ENCODE measurements at regions of chrX and their contacts with region 1.

Region 1: GRCh38 chrX:63754860-63755582 is 30.0 kb downstream of the ARHGEF9 start:
- DNase-seq: peak; percentile 68 to 93 (median 84)
- ATAC-seq: peak; percentile 94
- H3K4me3 ChIP-seq: peak overlapping the region; percentile 91 to 94
- H3K4me3 Mint-ChIP-seq: peak overlapping the region; percentile 99
- H3K27ac ChIP-seq: peak overlapping the region; percentile 89 to 92
- H3K27ac Mint-ChIP-seq: peak overlapping the region; percentile 98
- H3K4me1 ChIP-seq: peaks cover 21% of the 10 kb centered on the region
- H3K4me1 Mint-ChIP-seq: peaks cover 35% of the 10 kb centered on the region
- H3K27me3 ChIP-seq: no peaks in the 10 kb centered on the region
- H3K27me3 Mint-ChIP-seq: peaks cover under 1% of the 10 kb centered on the region
- CTCF ChIP-seq: no peak

Region 2: DNA sequence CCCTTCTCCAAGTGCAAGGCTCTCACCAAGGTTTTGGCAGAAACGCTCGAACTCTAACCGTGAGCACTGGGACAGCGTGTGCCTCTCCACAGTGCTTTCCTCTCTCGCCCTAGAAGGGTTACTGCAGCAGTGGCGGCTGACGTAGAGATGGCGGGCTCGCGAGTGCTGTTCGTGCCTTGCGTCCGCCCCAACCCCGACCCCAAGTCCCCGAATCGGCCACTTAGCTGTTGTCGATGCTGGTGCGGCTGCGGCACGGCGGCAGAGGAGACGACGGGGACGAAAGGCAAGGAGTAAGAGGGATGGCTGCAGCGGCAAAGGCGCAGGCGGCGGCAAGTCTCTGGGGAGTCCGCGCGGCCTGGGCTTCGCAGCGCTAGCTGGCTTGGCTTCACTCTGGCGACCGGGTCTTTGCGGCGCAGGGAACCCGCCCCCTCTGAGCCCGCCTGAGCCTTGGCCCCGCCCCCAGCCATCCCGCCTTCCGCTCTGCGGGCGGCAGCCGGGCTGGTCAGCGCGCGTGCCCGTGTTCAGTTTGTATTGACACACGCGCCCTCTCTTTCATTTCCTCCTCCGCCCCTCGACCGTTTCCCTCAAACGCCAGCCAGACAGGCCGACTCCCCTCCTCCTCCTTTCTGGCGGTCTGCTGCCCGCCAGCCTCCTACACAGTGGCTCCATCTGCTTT is 403.9 kb before region 1 on chrX and contains the start of gene SPIN4:
- CTCF ChIA-PET with region 1: no interaction called
- POLR2A ChIA-PET with region 1: no interaction called
- intact Hi-C with region 1: loop called (anchors 1 to 5 kb)
- DNase-seq: peak; percentile 7 to 79 (median 53)
- ATAC-seq: peak; percentile 80
- H3K4me3 ChIP-seq: peak within 1 kb of the TSS; percentile 66 to 71
- H3K4me3 Mint-ChIP-seq: peak within 1 kb of the TSS; percentile 91
- H3K27ac ChIP-seq: peak within 1 kb of the TSS; percentile 29 to 63
- H3K27ac Mint-ChIP-seq: peak within 1 kb of the TSS; percentile 66
- H3K4me1 ChIP-seq: peaks cover 8% of the 10 kb centered on the region
- H3K4me1 Mint-ChIP-seq: peaks cover 26% of the 10 kb centered on the region
- H3K27me3 ChIP-seq: no peaks in the 10 kb centered on the region
- H3K27me3 Mint-ChIP-seq: no peaks in the 10 kb centered on the region
- CTCF ChIP-seq: no peak
- total RNA-seq, gene SPIN4: 1.0 to 1.3 TPM

Region 3: DNA sequence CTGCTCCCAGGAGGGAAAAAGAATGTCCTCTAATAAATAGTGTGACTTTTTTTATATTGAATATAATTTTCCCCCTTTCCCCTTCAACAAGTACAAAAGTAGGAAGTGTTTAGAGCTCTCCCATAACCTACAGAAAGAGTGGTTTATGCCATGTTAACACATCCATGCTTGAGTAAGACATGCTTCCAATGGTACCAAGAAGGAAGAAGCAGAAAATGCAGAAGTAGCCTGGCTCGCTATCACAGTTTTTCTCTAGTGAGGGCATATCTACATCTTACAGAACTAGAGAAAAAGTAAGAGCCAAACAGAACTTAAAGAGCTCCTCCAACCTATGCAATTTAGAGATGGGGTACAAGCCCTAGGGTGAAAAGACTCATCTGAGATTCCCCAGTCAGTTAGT is 52.5 kb before region 1 on chrX:
- CTCF ChIA-PET with region 1: no interaction called
- POLR2A ChIA-PET with region 1: no interaction called
- intact Hi-C with region 1: loop called (anchors 10 kb)
- DNase-seq: no peak
- ATAC-seq: no peak
- H3K4me3 ChIP-seq: no peak overlapping the region
- H3K4me3 Mint-ChIP-seq: no peak overlapping the region
- H3K27ac ChIP-seq: no peak overlapping the region
- H3K27ac Mint-ChIP-seq: no peak overlapping the region
- H3K4me1 ChIP-seq: no peaks in the 10 kb centered on the region
- H3K4me1 Mint-ChIP-seq: peaks cover 2% of the 10 kb centered on the region
- H3K27me3 ChIP-seq: no peaks in the 10 kb centered on the region
- H3K27me3 Mint-ChIP-seq: no peaks in the 10 kb centered on the region
- CTCF ChIP-seq: no peak

Region 4: DNA sequence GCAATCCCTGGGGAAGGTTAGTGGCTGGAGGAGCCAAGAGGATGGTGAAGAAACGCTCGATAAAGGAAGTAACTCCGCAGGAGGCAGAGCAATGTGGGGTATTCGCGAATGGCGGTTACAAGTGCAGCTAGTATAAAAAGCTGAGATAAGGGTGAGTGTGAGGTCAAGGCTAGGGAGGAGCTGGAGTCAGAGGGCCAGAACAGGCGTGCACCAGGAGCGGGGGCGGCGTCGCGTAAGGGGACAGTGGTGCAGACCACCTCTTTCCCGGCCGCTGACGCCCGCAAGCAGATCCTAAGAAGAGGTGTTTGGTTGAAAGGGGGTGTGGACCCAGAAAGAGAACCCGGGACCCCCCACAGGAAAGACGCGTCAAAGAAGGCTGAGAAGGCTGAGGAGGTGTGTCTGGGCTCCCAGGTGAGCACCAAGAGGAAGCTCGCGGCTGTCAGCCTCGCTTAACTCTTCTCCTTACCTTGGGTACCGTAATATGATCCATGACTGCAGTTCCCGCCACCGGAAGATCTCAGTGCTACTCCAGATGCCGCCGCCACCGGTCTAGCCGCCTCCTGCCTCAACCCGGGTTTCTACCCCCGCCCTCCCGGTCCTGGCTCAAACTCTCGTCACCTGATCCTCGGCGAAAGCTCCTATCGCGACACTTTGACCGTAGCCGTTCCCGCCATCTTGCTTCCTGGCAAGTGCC is 640.0 kb after region 1 on chrX and contains the start of gene MTMR8:
- CTCF ChIA-PET with region 1: no interaction called
- POLR2A ChIA-PET with region 1: interaction called, 3 read pairs
- intact Hi-C with region 1: loop called in 1 of 2 experiments (anchors 10 kb)
- DNase-seq: peak; percentile 53 to 86 (median 77)
- ATAC-seq: peak; percentile 87
- H3K4me3 ChIP-seq: peak within 1 kb of the TSS; percentile 60 to 87
- H3K4me3 Mint-ChIP-seq: peak within 1 kb of the TSS; percentile 94
- H3K27ac ChIP-seq: peak within 1 kb of the TSS; percentile 32 to 44
- H3K27ac Mint-ChIP-seq: peak within 1 kb of the TSS; percentile 91
- H3K4me1 ChIP-seq: peaks cover 4% of the 10 kb centered on the region
- H3K4me1 Mint-ChIP-seq: peaks cover 47% of the 10 kb centered on the region
- H3K27me3 ChIP-seq: no peaks in the 10 kb centered on the region
- H3K27me3 Mint-ChIP-seq: no peaks in the 10 kb centered on the region
- CTCF ChIP-seq: no peak
- total RNA-seq, gene MTMR8: 2.1 to 2.5 TPM

Region 5: DNA sequence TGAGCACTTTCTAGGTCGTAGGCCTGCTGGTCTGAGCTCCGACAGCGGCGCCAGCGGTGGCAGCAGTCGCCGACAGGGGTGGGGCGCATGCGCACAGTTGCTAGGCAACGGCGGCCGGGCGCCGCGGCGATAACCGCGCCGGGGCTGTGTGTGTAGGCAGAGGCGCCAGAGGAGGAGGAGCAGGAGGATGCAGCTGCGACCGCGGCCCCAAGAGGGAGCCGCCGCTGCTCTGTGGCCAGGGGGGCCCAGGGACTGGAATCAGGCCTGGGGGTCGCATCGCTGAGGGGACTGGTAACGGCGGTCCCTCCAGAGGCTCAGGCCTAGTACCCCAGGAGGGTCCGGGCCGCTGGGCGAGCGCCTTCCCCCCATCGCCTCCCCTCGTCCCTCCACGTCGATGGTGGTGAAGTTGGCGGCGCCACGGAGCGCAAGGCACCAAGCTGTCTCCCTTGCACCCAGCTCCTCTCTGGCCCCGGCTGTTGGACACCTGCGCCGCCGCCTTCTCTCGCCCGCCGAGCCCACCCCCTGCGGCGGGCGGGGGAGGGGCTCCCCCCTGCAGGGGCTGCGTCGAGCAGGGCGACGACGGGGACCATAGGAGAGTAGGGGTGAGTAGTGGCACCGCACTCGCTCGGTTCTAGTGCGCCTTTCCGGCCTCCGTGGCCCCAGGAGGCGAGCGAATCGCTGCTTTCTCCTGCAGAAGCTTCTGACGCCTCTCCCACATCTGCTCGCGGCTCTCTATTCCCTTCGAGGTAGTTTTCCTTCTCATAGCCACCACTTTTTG is 1279.8 kb after region 1 on chrX:
- CTCF ChIA-PET with region 1: no interaction called
- POLR2A ChIA-PET with region 1: no interaction called
- intact Hi-C with region 1: loop called (anchors 2 to 5 kb)
- DNase-seq: peak; percentile 59 to 89 (median 80)
- ATAC-seq: peak; percentile 85
- H3K4me3 ChIP-seq: peak within 1 kb of the TSS; percentile 64 to 66
- H3K4me3 Mint-ChIP-seq: peak within 1 kb of the TSS; percentile 94
- H3K27ac ChIP-seq: peak within 1 kb of the TSS; percentile 72 to 78
- H3K27ac Mint-ChIP-seq: peak within 1 kb of the TSS; percentile 96
- H3K4me1 ChIP-seq: peaks cover 10% of the 10 kb centered on the region
- H3K4me1 Mint-ChIP-seq: peaks cover 37% of the 10 kb centered on the region
- H3K27me3 ChIP-seq: no peaks in the 10 kb centered on the region
- H3K27me3 Mint-ChIP-seq: no peaks in the 10 kb centered on the region
- CTCF ChIP-seq: peak; percentile 46